A549 (cell line): ENCODE measurements at regions of chr14 and their contacts with region 1.

Region 1: GRCh38 chr14:60164712-60165546 is at the start of gene DHRS7:
- DNase-seq: peak; percentile 76 to 82
- ATAC-seq: peak; percentile 96 to 99
- H3K4me3 ChIP-seq: peak within 1 kb of the TSS; percentile 83
- H3K27ac ChIP-seq: peak within 1 kb of the TSS; percentile 83 to 91
- H3K4me1 ChIP-seq: peaks cover 17% of the 10 kb centered on the region; the same call in 2 of the 3 replicates
- CTCF ChIP-seq: peak; percentile 81
- EP300 ChIP-seq: no peak
- POLR2A ChIP-seq: peak; percentile 83
- RAD21 ChIP-seq: peak; percentile 65 to 83
- polyA plus RNA-seq, gene DHRS7: 74.4 and 97.5 TPM in 2 replicates

Region 2: DNA sequence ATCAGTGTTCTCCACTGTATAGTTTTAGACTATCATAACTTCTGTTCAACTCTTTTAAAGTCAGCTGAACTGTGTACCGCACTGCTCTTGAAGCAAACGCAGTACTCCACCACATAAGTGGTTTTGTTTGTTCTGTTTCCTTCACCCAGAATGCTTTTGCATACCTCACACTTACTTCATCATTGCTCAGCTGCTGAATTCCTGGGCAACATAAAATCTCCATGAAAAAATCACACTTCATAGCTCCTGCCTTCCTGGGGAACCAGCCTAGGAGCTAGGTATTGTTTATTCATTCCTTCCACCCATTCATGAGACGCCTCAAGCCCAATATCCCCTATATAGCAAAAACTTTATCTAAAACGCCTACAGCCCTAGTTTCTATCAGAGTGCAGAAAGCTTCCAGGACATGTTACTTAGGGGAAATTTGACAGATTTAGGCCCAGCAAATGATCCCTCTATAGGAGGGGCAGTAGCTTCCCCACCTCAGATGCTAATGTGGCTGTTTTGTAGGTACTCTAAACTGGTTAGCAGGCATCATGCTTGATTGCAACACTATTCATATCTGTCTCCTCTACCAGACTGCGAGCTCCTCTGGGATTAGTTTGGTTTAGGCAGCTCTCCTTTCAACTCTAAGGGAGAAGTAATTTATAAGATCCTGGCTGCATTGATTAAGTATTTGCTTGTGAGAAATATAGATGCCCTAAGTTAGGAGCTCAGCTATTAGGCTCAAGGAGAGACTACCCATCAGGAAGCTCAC is 200.5 kb before region 1 on chr14:
- CTCF ChIA-PET with region 1: interaction called, 20 read pairs
- POLR2A ChIA-PET with region 1: interaction called, 13 read pairs
- DNase-seq: no peak
- ATAC-seq: peak; percentile 17 to 40; a peak in 3 of 6 replicates
- H3K4me3 ChIP-seq: no peak overlapping the region
- H3K27ac ChIP-seq: no peak overlapping the region
- H3K4me1 ChIP-seq: peaks cover 5% of the 10 kb centered on the region; the same call in 1 of the 3 replicates
- CTCF ChIP-seq: no peak
- EP300 ChIP-seq: no peak
- POLR2A ChIP-seq: no peak
- RAD21 ChIP-seq: no peak

Region 3: DNA sequence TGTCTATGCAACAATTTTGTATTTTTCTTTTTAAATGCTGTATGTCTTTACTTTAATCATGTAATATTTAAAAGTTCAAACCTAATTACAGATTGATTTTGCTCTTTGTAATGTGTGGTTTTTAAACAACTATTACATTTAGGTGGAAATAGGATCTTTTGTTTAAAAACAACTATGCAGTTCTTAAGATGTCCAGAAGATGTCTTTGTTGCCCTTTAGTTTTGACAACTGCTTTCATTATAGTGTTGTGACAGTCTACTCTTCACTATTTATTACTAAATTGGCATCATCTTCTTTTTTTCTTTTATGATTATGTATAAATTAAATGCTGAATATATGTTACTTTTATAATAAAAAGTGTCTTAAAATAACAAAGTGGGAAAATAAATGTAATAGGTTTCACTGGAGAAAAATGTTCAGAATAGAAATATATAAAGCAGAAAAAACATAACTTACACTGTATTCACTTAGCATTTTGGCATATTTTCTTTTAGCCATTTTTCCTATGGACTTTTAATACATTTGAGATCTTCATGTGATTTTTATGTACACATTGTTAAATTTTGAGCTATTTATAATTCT is 100.3 kb before region 1 on chr14:
- CTCF ChIA-PET with region 1: interaction called, 44 read pairs
- POLR2A ChIA-PET with region 1: no interaction called
- DNase-seq: peak; percentile 3 to 51
- ATAC-seq: peak; percentile 54 to 67; a peak in 4 of 6 replicates
- H3K4me3 ChIP-seq: no peak overlapping the region
- H3K27ac ChIP-seq: no peak overlapping the region
- H3K4me1 ChIP-seq: no peaks in the 10 kb centered on the region
- CTCF ChIP-seq: peak; percentile 68
- EP300 ChIP-seq: no peak
- POLR2A ChIP-seq: no peak
- RAD21 ChIP-seq: peak; percentile 79 to 83

Region 4: DNA sequence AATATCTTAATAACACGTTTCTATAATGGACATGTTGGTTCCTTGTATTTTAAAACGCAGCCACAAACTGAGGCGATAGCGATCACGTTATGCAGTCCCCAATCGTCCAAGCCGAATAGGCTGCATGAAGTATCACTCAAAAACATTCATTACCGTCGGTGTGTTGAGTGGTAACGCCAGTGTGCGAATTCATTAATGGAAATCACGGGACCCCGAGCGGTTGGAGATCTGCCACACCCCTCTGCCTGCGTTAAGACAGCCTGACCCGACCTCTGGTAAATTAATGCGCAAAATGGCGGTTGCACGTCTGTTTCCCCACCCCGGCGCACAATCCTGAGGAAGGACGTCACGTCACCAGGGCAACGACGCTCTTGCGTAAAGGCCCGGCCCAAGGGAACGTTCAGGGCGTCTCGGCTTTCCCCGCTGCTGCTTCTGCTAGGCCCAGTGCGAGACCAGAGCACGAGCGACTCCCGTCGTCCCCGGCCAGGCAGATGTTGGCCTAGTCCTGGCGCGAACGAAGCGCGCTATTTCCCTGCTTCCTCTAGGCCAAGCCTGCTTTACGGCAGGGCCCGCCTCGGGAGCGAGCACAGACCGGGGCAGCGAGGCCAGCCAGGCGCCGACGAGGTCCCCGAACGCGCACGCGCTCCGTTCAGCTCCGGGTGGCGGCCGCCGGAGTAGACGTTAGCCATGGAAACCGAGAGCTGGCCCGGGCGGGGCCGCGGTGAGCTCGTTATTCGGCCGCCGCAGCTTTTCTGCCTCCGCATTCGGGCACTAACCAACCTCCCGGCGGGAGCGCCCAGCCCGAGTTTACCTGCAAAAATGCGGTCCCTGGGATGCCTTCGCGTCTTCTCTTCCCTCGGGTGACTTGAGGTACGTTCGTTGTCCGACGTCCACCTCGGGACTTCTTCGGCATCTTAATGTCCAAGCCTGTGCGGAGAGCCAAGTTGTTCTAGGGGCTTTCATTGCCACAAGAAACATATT is 73.1 kb before region 1 on chr14 and contains the start of gene PCNX4:
- CTCF ChIA-PET with region 1: interaction called, 8 read pairs
- POLR2A ChIA-PET with region 1: interaction called, 15 read pairs
- DNase-seq: peak; percentile 86 to 99
- ATAC-seq: peak; percentile 96 to 97
- H3K4me3 ChIP-seq: peak within 1 kb of the TSS; percentile 72
- H3K27ac ChIP-seq: peak within 1 kb of the TSS; percentile 92 to 97
- H3K4me1 ChIP-seq: peaks cover 31% of the 10 kb centered on the region
- CTCF ChIP-seq: no peak
- EP300 ChIP-seq: no peak
- POLR2A ChIP-seq: peak; percentile 95
- RAD21 ChIP-seq: no peak
- polyA plus RNA-seq, gene PCNX4: 51.0 and 94.5 TPM in 2 replicates

Region 5: GRCh38 chr14:60151715-60152114 is 13.2 kb before region 1 on chr14:
- CTCF ChIA-PET with region 1: interaction called, 17 read pairs
- POLR2A ChIA-PET with region 1: interaction called, 9 read pairs
- DNase-seq: peak; percentile 51 to 85
- ATAC-seq: peak; percentile 97 to 100
- H3K4me3 ChIP-seq: no peak overlapping the region
- H3K27ac ChIP-seq: peak overlapping the region; percentile 43 to 68; a peak in 5 of 6 replicates
- H3K4me1 ChIP-seq: peaks cover 17% of the 10 kb centered on the region
- CTCF ChIP-seq: no peak
- EP300 ChIP-seq: peak in 1 of 2 experiments; percentile 22; a peak in 1 of 5 replicates
- POLR2A ChIP-seq: no peak
- RAD21 ChIP-seq: no peak

Region 6: GRCh38 chr14:60175246-60175902 is 10.4 kb after region 1 on chr14:
- CTCF ChIA-PET with region 1: interaction called, 14 read pairs
- POLR2A ChIA-PET with region 1: interaction called, 5 read pairs
- DNase-seq: no peak
- ATAC-seq: 0 out of 6 replicates have a peak, but pooled peaks of 1 of the 2 experiments have one; percentile 42
- H3K4me3 ChIP-seq: no peak overlapping the region
- H3K27ac ChIP-seq: no peak overlapping the region
- H3K4me1 ChIP-seq: no peaks in the 10 kb centered on the region
- CTCF ChIP-seq: no peak
- EP300 ChIP-seq: no peak
- POLR2A ChIP-seq: no peak
- RAD21 ChIP-seq: no peak

Region 7: GRCh38 chr14:60184146-60184904 is 19.4 kb after region 1 on chr14:
- CTCF ChIA-PET with region 1: interaction called, 29 read pairs
- POLR2A ChIA-PET with region 1: no interaction called
- DNase-seq: peak; percentile 12 to 61
- ATAC-seq: peak in 1 of 2 experiments; percentile 57; a peak in 2 of 6 replicates
- H3K4me3 ChIP-seq: peak overlapping the region; percentile 42
- H3K27ac ChIP-seq: peak overlapping the region; percentile 2 to 35; a peak in 3 of 6 replicates
- H3K4me1 ChIP-seq: peaks cover 7% of the 10 kb centered on the region; the same call in 2 of the 3 replicates
- CTCF ChIP-seq: peak; percentile 96
- EP300 ChIP-seq: no peak
- POLR2A ChIP-seq: no peak
- RAD21 ChIP-seq: peak; percentile 94 to 95